ENCODE measurements at regions of chr7 and their contacts with region 1.

Region 1: DNA sequence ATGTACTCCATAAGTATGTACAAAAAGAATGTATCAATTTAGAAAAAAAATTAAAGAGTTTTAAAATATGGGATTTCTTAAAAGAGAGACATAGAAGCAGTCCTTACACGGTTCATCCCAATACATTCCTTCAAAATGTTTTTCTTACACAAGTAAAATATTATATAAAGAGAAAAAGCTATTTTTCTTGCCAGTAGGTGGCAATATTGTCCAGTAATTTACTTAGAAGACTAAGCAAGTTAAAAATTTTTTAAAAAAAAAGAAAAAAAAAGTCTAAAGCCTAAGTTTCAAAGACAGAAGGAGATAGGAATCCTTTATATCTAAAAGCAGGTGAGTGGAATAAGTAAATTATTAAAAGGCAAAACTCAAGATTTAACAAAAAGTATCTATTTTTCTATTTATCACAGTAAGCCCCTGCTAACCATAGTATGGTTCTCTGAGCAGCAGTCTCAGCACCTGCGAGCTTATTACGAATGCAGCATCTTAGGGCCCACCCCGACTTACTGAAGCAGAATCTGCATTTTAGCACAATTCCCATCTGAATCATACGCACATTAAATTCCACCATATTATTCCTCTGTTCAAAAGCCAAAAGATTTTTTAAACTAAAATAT is 240.6 kb downstream of the DGKI start:
- DNase-seq: peak; percentile 13
- H3K4me3 ChIP-seq: no peak overlapping the region
- H3K27ac ChIP-seq: no peak overlapping the region
- H3K27me3 ChIP-seq: no peaks in the 10 kb centered on the region
- CTCF ChIP-seq: peak; percentile 45

Region 2: DNA sequence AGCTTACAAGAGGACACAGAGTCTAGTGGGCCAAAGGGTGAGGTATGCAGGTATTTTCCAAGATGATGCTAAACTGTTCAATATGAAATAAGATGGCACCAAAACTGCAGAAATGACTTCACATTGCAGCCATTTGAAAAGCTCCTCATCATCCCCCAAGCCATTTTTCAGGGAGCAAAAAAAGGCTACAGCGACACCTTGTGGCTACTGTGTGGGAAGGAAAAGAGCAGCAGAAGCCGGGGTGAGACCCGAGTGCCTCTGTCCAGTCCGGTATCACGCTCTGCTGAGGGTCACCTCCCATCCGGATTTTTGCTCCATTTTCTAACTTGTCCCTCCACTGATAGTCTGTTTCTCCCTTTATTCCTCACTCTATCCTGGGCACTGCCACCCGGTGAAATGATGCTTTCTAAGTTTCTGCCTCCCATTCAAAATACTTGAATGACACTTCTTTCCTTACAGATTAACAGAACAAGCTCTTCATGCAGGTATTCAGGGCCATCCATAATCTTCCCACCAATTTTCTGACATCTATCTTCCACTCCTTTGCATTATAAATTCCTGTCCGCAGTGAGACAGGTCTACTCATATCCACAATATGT is 20.4 kb after region 1 on chr7:
- CTCF ChIA-PET with region 1: interaction called, 52 read pairs
- POLR2A ChIA-PET with region 1: no interaction called
- DNase-seq: peak; percentile 6
- H3K4me3 ChIP-seq: no peak overlapping the region
- H3K27ac ChIP-seq: no peak overlapping the region
- H3K27me3 ChIP-seq: no peaks in the 10 kb centered on the region
- CTCF ChIP-seq: peak; percentile 81

Region 3: GRCh38 chr7:137898839-137899721 is 292.9 kb after region 1 on chr7:
- CTCF ChIA-PET with region 1: interaction called, 79 read pairs
- POLR2A ChIA-PET with region 1: no interaction called
- DNase-seq: peak; percentile 47
- H3K4me3 ChIP-seq: no peak overlapping the region
- H3K27ac ChIP-seq: peak overlapping the region; percentile 47
- H3K27me3 ChIP-seq: no peaks in the 10 kb centered on the region
- CTCF ChIP-seq: peak; percentile 98

Region 4: DNA sequence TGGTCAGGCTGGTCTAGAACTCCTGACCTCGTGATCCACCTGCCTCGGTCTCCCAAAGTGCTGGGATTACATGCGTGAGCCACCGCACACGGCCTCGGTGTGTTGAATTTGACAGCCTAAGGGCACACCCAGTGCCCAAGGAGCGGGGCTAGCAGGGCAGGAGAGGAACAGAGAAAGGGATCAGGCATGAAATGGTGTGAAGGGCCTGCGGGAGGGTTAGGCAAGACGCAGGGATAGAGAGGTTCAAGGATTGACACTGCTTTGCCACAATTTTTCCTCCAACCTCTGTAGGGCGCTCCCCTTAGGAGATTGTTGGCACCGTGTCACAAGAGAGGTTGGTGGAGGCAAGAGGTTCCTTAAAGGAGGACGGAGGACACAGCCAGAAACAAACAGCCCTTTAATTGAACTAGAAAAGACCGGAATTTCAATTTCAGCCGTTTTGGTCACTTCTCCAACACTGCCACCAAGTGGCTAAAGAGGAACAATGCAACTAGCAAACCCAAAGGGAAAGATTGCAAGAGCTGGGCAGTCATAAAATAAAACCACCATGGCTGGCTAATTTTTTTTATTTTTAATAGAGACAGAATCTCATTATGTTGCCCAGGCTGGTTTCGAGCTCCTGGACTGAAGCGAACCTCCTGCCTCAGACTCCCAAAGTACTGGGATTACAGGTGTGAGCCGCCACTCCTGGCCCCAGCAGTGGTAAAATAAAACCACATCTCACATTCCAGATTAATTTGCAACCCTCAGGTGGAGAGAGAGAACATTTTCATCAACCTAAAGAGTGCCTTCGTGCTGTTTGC is 402.6 kb after region 1 on chr7:
- CTCF ChIA-PET with region 1: interaction called, 10 read pairs
- POLR2A ChIA-PET with region 1: no interaction called
- DNase-seq: no peak
- H3K4me3 ChIP-seq: no peak overlapping the region
- H3K27ac ChIP-seq: no peak overlapping the region
- H3K27me3 ChIP-seq: peaks cover 4% of the 10 kb centered on the region
- CTCF ChIP-seq: peak; percentile 89